Activated CD4-positive, alpha-beta memory T cell treated with anti-CD3 and anti-CD28 coated beads, Interleukin-2, amount 10 ng/mL, durations not matched to agents 7 days and 5 days (primary cell): ENCODE measurements at regions of chr4 and their contacts with region 1.

Region 1: DNA sequence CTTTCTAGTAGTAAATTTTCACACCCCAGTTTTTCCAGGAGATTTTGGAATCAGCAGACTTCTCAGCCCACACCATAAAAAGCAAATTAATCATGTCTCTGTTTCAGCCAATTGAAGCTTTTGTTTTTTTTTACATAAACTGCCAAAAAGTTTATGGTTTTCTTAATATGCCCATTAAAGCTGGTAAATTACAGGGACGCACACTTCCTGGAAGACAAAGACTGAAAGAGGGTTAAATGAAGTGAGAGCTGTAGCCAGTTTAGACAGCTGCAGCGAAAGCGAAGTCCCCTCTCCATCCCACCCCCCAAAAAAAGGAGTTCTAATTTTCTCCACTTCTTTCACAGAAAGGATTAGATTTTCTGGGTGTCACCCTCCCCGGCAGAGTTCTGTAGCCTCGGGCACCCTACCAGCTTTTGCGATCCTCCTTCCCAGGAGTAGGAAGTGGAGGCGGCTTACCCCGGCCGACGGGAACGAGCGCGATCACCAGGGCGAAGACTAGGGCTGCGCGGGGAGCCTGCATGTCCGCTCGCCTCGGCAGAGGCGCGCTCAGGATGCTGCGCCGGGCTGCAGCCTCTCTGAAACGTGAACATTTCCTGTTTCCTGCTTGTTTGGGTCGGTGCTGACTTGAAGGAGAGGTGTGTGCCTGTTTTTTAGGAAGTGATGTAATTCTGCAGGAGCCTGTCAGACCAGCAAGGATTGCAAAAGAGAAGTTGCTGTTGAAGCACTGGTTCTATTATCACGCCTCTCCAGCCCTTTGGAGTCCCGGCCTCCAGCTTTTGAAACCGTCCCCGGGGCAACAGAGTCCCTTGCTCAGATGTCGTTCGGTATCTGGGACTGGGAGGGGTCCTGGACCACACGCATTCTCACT is at the start of gene TMEM154:
- DNase-seq: peak; percentile 84
- H3K4me3 Mint-ChIP-seq: peak within 1 kb of the TSS; percentile 90
- H3K27ac Mint-ChIP-seq: peak within 1 kb of the TSS; percentile 92
- H3K4me1 Mint-ChIP-seq: peaks cover 74% of the 10 kb centered on the region
- H3K27me3 Mint-ChIP-seq: no peaks in the 10 kb centered on the region
- total RNA-seq, gene TMEM154: 47.1 to 50.0 TPM

Region 2: DNA sequence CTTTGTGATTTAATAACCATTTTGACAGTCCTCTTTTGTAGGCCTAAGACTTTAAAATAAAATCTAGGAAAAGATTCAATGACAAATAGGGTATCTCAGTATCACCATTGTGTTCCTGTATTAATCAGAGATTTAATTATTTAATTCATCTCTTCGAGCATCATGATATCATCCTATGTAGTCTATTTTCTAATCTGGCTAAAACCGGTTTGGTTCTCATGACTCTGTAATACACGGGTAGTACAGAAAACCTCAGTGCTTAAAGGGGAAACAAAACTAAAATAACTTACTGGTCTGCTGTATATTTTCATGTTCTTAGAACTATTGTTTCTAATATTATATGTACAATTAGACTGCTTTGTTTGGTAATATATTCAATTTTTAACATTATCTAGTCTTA is 120.0 kb before region 1 on chr4:
- CTCF ChIA-PET with region 1: no interaction called
- POLR2A ChIA-PET with region 1: interaction called, 12 read pairs
- DNase-seq: no peak
- H3K4me3 Mint-ChIP-seq: no peak overlapping the region
- H3K27ac Mint-ChIP-seq: no peak overlapping the region
- H3K4me1 Mint-ChIP-seq: peaks cover 30% of the 10 kb centered on the region
- H3K27me3 Mint-ChIP-seq: peaks cover 1% of the 10 kb centered on the region

Region 3: DNA sequence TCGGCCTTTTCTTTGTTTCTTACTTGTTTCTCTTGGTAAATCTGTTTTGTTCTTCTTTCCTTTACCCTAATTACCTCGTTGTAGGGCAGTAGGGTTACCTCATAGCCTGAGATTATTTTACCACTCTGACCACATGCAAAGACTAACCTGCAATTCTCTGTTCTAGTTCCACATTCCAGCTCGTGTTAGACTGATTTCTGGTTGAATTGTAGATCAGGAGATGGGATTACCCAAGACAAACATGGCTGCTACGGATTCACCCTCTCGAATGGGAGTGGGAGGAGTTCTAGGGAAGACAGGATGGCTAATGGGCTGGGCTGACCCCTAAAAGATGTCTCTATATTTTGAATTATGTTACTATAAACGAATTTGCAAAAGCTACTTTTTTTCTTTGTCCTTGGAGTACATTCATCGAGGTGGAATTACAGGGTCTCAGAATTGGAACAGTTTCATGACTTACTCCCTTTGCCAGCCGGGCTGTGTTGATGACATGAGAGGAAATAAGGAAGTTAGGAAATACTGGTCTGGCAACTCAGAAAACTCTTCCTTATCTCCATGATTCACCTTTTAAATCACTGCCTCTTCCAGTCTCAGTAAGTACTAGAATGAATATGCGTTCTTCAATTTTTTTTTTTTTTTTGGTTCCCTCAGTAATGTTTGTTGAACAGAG is 107.1 kb before region 1 on chr4:
- CTCF ChIA-PET with region 1: no interaction called
- POLR2A ChIA-PET with region 1: no interaction called
- DNase-seq: no peak
- H3K4me3 Mint-ChIP-seq: no peak overlapping the region
- H3K27ac Mint-ChIP-seq: no peak overlapping the region
- H3K4me1 Mint-ChIP-seq: no peaks in the 10 kb centered on the region
- H3K27me3 Mint-ChIP-seq: peaks cover 10% of the 10 kb centered on the region

Region 4: DNA sequence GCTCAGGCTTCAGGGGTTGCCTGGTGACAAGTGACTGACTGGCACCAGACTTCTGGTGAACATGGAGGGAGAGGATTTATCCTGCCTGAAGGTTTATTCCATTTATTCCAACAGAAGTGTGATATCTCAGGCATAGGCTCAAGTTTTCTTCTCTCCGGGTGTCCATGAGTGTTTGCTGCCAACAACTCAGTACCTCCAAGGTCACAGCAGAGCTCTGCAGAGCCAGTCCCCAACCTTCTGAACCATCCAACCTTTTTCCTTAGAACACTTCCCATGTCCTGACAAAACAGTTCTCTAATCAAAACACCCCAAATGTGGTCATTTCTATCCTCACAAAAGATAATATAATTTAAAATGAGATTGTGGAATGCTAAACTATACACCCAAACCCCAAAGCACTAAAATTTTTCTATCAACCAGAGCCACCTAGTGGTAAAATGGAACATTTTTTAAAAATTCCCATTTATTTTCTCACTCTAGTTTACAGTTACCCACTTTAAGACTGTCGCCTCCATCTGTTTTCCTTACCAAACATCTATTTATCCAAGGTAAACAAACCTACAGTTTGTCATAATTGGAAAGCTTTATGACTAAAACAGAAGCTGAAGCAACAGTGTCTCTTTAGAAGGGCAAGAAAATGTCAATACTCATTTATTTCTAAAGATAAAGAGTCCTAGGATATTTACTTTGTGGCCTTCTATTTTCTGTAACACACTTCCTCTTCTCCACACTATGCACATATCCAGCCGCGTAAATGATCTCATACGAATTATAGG is 39.4 kb before region 1 on chr4:
- CTCF ChIA-PET with region 1: interaction called, 10 read pairs
- POLR2A ChIA-PET with region 1: interaction called, 14 read pairs
- DNase-seq: no peak
- H3K4me3 Mint-ChIP-seq: no peak overlapping the region
- H3K27ac Mint-ChIP-seq: no peak overlapping the region
- H3K4me1 Mint-ChIP-seq: peaks cover 42% of the 10 kb centered on the region
- H3K27me3 Mint-ChIP-seq: no peaks in the 10 kb centered on the region

Region 5: GRCh38 chr4:152697284-152698088 is 17.8 kb after region 1 on chr4:
- CTCF ChIA-PET with region 1: interaction called, 6 read pairs
- POLR2A ChIA-PET with region 1: interaction called, 14 read pairs
- DNase-seq: no peak
- H3K4me3 Mint-ChIP-seq: no peak overlapping the region
- H3K27ac Mint-ChIP-seq: peak overlapping the region; percentile 77
- H3K4me1 Mint-ChIP-seq: peaks cover 29% of the 10 kb centered on the region
- H3K27me3 Mint-ChIP-seq: no peaks in the 10 kb centered on the region

Region 6: GRCh38 chr4:152735396-152735859 is 55.8 kb after region 1 on chr4:
- CTCF ChIA-PET with region 1: interaction called, 11 read pairs
- POLR2A ChIA-PET with region 1: no interaction called
- DNase-seq: no peak
- H3K4me3 Mint-ChIP-seq: no peak overlapping the region
- H3K27ac Mint-ChIP-seq: no peak overlapping the region
- H3K4me1 Mint-ChIP-seq: peaks cover 12% of the 10 kb centered on the region
- H3K27me3 Mint-ChIP-seq: peaks cover 3% of the 10 kb centered on the region

Region 7: GRCh38 chr4:152779513-152780266 is 100.0 kb after region 1 on chr4 and contains the starts of genes ARFIP1 and TIGD4:
- CTCF ChIA-PET with region 1: interaction called, 5 read pairs
- POLR2A ChIA-PET with region 1: interaction called, 22 read pairs
- DNase-seq: peak; percentile 97
- H3K4me3 Mint-ChIP-seq: peak within 1 kb of the TSS; percentile 99
- H3K27ac Mint-ChIP-seq: peak within 1 kb of the TSS; percentile 94
- H3K4me1 Mint-ChIP-seq: peaks cover 46% of the 10 kb centered on the region
- H3K27me3 Mint-ChIP-seq: peaks cover 11% of the 10 kb centered on the region
- total RNA-seq, gene ARFIP1: 15.5 to 16.3 TPM
- total RNA-seq, gene TIGD4: 0.13 to 0.35 TPM